Endothelial cell of umbilical vein (primary cell): ENCODE measurements at regions of chr2 and their contacts with region 1.

Region 1: GRCh38 chr2:52022006-52022405 is 990.1 kb upstream of the NRXN1 start:
- DNase-seq: no peak
- H3K4me3 ChIP-seq: no peak overlapping the region
- H3K27ac ChIP-seq: no peak overlapping the region
- H3K4me1 ChIP-seq: no peaks in the 10 kb centered on the region
- H3K27me3 ChIP-seq: no peaks in the 10 kb centered on the region
- CTCF ChIP-seq: no peak
- POLR2A ChIP-seq: no peak

Region 2: GRCh38 chr2:52034706-52035105 is 12.7 kb after region 1 on chr2:
- CTCF ChIA-PET with region 1: no interaction called
- POLR2A ChIA-PET with region 1: no interaction called
- dilution Hi-C with region 1: no loop called
- intact Hi-C with region 1: no loop called
- DNase-seq: no peak
- H3K4me3 ChIP-seq: no peak overlapping the region
- H3K27ac ChIP-seq: no peak overlapping the region
- H3K4me1 ChIP-seq: no peaks in the 10 kb centered on the region
- H3K27me3 ChIP-seq: no peaks in the 10 kb centered on the region
- CTCF ChIP-seq: no peak
- POLR2A ChIP-seq: no peak

Region 3: DNA sequence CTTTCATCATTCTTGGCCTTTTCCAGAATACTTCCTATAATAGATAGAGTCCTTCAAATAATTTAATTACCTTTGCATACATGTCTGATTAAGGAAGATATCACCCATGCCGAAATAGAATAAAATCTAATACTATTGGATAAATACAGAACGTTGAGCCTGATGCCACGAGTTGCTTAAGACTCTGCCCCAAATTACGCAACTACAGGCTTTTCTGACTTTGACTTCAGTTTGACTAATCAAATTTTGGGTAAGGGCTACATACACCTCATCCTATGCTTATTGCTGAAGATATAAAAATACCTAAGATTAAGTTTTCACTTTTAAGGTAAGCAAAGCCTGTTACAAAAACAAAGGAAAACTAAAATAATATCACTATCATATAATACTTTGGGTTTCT is 75.1 kb after region 1 on chr2:
- CTCF ChIA-PET with region 1: no interaction called
- POLR2A ChIA-PET with region 1: no interaction called
- dilution Hi-C with region 1: no loop called
- intact Hi-C with region 1: loop called (anchors 2 kb)
- DNase-seq: no peak
- H3K4me3 ChIP-seq: no peak overlapping the region
- H3K27ac ChIP-seq: no peak overlapping the region
- H3K4me1 ChIP-seq: no peaks in the 10 kb centered on the region
- H3K27me3 ChIP-seq: no peaks in the 10 kb centered on the region
- CTCF ChIP-seq: no peak
- POLR2A ChIP-seq: no peak